Ascending aorta (tissue), 2 donors: ENCODE measurements at regions of chr2 and their contacts with region 1.

Region 1: GRCh38 chr2:241217320-241218031 is 29.0 kb downstream of the ANO7 start:
- DNase-seq: peak in 1 of 2 donors; percentile 77
- H3K4me3 ChIP-seq: peak overlapping the region; percentile 40 to 65
- H3K27ac ChIP-seq: peak overlapping the region; percentile 78 to 90
- H3K4me1 ChIP-seq: peaks cover 0 to 7% of the 10 kb centered on the region in 2 donors
- H3K27me3 ChIP-seq: no peaks in the 10 kb centered on the region
- CTCF ChIP-seq: no peak

Region 2: DNA sequence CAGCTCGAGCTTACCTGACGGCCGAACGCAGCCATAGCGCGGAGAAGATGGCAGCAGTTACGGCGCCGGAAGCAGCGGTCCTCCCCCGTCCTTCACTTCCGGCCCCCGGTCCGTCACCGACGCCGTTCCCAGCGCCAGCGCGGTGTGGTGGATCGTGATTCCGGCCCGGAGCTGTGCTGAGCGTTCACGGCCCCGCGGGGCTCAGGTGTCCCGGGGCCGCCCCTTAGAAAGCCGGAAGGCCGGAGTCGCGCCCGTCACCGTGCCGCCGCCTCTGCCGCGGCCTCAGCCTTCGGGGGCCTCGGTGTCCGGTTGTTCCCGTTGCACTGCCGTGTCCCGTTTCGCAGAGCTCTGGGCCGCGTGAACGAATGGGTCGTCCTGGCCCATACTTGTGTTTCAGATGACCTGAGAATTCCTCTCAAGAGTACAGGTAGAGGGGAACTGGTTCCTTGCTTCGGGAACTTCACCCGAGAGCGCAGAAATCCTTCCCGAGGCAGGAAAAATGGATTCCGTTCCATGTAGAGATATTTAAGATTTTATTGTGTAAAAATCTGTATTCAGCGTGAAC is 115.2 kb before region 1 on chr2 and contains the start of gene MTERF4:
- intact Hi-C with region 1: loop called (anchors 5 kb)
- DNase-seq: peak; percentile 52 to 91
- H3K4me3 ChIP-seq: peak within 1 kb of the TSS; percentile 80 to 85
- H3K27ac ChIP-seq: peak within 1 kb of the TSS; percentile 84 to 85
- H3K4me1 ChIP-seq: peaks cover 6 to 10% of the 10 kb centered on the region in 2 donors
- H3K27me3 ChIP-seq: no peaks in the 10 kb centered on the region
- CTCF ChIP-seq: no peak
- total RNA-seq, gene MTERF4: 50.2 TPM